Activated CD4-positive, alpha-beta memory T cell treated with anti-CD3 and anti-CD28 coated beads for 36 hours (primary cell): ENCODE measurements at regions of chr4 and their contacts with region 1.

Region 1: GRCh38 chr4:24589448-24589847 is 5.1 kb upstream of the DHX15 start:
- DNase-seq: peak; percentile 20
- H3K4me3 Mint-ChIP-seq: no peak overlapping the region
- H3K27ac Mint-ChIP-seq: no peak overlapping the region
- H3K4me1 Mint-ChIP-seq: peaks cover 6% of the 10 kb centered on the region
- H3K27me3 Mint-ChIP-seq: peaks cover 16% of the 10 kb centered on the region

Region 2: DNA sequence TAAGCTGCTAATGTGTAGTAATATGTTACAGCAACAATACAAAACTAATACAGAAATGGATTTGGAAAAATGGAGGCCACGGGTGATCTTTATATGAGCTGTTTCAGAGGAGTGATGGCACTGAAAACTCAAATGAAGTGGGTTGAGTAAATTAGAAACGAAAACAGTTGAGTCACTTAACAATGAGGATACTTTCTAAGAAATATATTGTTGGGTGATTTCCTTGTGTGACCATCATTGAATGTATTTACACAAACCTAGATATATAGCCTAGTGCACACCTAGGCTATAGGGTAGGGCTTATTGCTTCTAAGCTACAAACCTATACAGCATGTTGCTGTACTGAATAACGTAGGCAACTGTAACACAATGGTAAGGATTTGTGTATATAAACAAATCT is 25.4 kb after region 1 on chr4:
- CTCF ChIA-PET with region 1: no interaction called
- POLR2A ChIA-PET with region 1: interaction called, 4 read pairs
- intact Hi-C with region 1: loop called (anchors 2 kb)
- DNase-seq: no peak
- H3K4me3 Mint-ChIP-seq: no peak overlapping the region
- H3K27ac Mint-ChIP-seq: no peak overlapping the region
- H3K4me1 Mint-ChIP-seq: peaks cover 2% of the 10 kb centered on the region
- H3K27me3 Mint-ChIP-seq: peaks cover 7% of the 10 kb centered on the region